B cell (primary cell): ENCODE measurements at regions of chr2 and their contacts with region 1.

Region 1: GRCh38 chr2:112275306-112275886 is at the start of gene ZC3H6:
- DNase-seq: peak; percentile 100
- ATAC-seq: peak; percentile 89
- H3K4me3 ChIP-seq: peak within 1 kb of the TSS; percentile 85 to 99 (median 97)
- H3K4me3 Mint-ChIP-seq: peak within 1 kb of the TSS; percentile 96
- H3K27ac ChIP-seq: peak within 1 kb of the TSS; percentile 99 to 100
- H3K27ac Mint-ChIP-seq: peak within 1 kb of the TSS; percentile 100
- H3K4me1 ChIP-seq: peaks cover 4 to 10% of the 10 kb centered on the region in 2 donors
- H3K4me1 Mint-ChIP-seq: peaks cover 15% of the 10 kb centered on the region
- H3K27me3 ChIP-seq: no peaks in the 10 kb centered on the region
- H3K27me3 Mint-ChIP-seq: no peaks in the 10 kb centered on the region
- CTCF ChIP-seq: no peak
- total RNA-seq, gene ZC3H6: 16.6 and 21.9 TPM in 2 replicates

Region 2: DNA sequence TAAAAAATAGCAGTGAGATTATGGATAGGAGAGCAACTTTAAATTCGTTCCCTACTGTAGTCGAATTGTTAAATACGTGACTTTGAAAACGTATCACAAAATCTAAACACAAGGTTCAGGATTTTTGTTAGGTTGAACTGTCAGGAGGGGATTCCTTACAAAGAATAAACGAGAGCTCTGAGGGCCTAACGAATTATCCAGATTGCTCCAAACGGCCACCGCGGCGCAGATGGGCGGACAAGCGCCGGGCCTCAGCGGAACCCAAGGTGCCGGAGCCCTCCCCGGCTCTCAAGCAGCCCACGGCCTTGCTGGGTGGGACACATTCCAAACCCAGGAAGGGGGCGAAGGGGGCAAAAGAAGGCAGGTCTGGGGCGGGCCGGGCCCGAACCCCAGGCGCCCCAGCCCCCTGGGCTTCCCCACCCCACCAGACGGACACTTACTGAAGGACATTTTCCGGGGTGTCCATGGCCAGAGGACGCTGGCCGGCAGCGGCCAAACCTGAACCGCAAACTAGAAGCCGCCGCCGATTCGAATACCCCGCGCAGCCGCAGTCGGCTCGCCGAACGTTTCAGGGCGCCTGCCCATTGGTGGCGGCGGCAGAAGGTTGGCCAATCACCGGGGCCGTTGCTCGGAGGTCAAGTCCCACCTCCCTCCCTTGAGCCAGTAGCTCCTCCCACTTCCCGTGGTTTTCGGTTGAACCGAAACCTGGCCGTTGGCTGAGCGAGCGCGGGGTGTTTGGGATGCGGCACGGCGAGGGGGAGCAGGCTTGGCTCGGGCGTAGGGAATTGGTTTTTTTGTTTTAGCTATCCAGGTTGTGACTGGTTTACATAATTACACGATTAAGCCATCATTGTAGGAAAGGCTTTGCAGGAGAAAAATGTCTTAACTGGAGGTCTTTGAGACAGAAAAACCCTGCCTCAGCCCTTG is 1597.6 kb before region 1 on chr2 and contains the start of gene BUB1:
- CTCF ChIA-PET with region 1: no interaction called
- POLR2A ChIA-PET with region 1: no interaction called
- intact Hi-C with region 1: loop called (anchors 5 kb)
- DNase-seq: peak; percentile 96
- ATAC-seq: peak; percentile 92
- H3K4me3 ChIP-seq: peak within 1 kb of the TSS; percentile 69 to 98 (median 93)
- H3K4me3 Mint-ChIP-seq: peak within 1 kb of the TSS; percentile 96
- H3K27ac ChIP-seq: peak within 1 kb of the TSS; percentile 77 to 81
- H3K27ac Mint-ChIP-seq: peak within 1 kb of the TSS; percentile 91
- H3K4me1 ChIP-seq: peaks cover 34 to 35% of the 10 kb centered on the region in 2 donors
- H3K4me1 Mint-ChIP-seq: peaks cover 40% of the 10 kb centered on the region
- H3K27me3 ChIP-seq: no peaks in the 10 kb centered on the region
- H3K27me3 Mint-ChIP-seq: no peaks in the 10 kb centered on the region
- CTCF ChIP-seq: no peak
- total RNA-seq, gene BUB1: 1.6 and 2.0 TPM in 2 replicates

Region 3: DNA sequence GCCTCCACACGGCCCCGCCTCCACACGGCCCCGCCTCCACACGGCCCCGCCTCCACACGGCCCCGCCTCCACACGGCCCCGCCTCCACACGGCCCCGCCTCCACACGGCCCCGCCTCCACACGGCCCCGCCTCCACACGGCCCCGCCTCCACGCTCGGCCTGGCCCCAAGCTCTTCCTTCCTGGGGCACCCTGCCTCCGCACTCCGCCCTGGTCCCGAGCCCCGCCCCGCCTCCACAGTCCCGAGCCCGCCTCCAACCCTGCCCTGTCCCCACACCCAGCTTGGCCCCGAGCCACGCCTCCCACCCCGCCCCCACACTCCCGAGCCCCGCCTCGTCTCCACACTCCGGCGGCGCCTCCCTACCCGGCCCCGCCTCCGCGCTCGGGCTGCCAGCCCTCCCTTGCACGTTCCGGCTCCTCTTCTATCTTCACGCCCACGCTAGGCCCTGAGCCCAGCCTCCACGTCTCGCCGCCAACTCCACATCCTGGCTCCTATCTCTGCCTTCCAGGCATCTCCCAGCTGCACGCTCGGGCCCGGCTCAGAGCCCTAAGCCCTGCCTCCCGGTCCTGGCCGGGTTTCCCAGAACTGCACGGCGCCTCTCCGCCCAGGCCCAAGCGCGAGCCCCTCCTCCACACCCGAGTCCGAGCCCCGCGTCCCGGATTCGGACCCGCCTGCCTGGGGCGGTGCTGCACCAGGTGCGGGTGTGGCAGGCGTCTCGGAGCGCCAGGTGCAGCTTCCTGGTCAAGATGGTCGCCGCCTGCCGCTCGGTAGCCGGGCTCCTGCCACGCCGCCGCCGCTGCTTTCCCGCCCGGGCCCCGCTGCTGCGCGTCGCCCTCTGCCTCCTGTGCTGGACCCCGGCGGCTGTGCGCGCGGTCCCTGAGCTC is 220.3 kb before region 1 on chr2 and contains the start of gene TMEM87B:
- CTCF ChIA-PET with region 1: no interaction called
- POLR2A ChIA-PET with region 1: interaction called, 4 read pairs
- intact Hi-C with region 1: loop called (anchors 1 kb)
- DNase-seq: peak; percentile 97
- ATAC-seq: peak; percentile 70
- H3K4me3 ChIP-seq: peak within 1 kb of the TSS; percentile 47 to 94 (median 87)
- H3K4me3 Mint-ChIP-seq: peak within 1 kb of the TSS; percentile 99
- H3K27ac ChIP-seq: peak within 1 kb of the TSS; percentile 80 to 87
- H3K27ac Mint-ChIP-seq: peak within 1 kb of the TSS; percentile 98
- H3K4me1 ChIP-seq: peaks cover 18 to 19% of the 10 kb centered on the region in 2 donors
- H3K4me1 Mint-ChIP-seq: peaks cover 41% of the 10 kb centered on the region
- H3K27me3 ChIP-seq: no peaks in the 10 kb centered on the region
- H3K27me3 Mint-ChIP-seq: no peaks in the 10 kb centered on the region
- CTCF ChIP-seq: no peak
- total RNA-seq, gene TMEM87B: 21.0 and 21.1 TPM in 2 replicates

Region 4: GRCh38 chr2:112259509-112260294 is 15.7 kb before region 1 on chr2:
- CTCF ChIA-PET with region 1: interaction called, 22 read pairs
- POLR2A ChIA-PET with region 1: interaction called, 6 read pairs
- intact Hi-C with region 1: loop called (anchors 1 kb)
- DNase-seq: peak; percentile 87
- ATAC-seq: peak; percentile 40
- H3K4me3 ChIP-seq: peak overlapping the region in 3 of 5 experiments; percentile 8 to 29 (median 12)
- H3K4me3 Mint-ChIP-seq: peak overlapping the region; percentile 70
- H3K27ac ChIP-seq: no peak overlapping the region
- H3K27ac Mint-ChIP-seq: peak overlapping the region; percentile 67
- H3K4me1 ChIP-seq: peaks cover 5 to 13% of the 10 kb centered on the region in 2 donors
- H3K4me1 Mint-ChIP-seq: peaks cover 11% of the 10 kb centered on the region
- H3K27me3 ChIP-seq: no peaks in the 10 kb centered on the region
- H3K27me3 Mint-ChIP-seq: no peaks in the 10 kb centered on the region
- CTCF ChIP-seq: peak; percentile 97

Region 5: DNA sequence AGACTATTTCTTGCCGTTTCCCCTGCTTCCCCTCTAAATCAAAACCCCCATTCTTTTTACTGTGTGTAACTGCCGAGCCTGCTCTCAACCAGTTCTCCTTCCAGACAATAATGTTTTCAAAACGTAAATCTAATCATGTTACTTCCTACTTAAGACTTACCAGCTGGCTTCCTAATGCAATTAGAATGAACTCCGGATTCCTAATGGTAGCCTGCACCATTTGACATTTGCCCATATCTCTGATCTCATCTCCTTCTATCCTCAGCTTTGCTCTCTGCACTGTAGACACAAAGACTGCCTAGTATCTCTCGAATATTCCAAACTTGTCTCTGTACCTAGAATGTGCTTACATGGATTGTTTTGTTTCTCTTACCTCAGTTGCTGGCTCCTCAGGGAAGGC is 219.4 kb after region 1 on chr2:
- CTCF ChIA-PET with region 1: no interaction called
- POLR2A ChIA-PET with region 1: interaction called, 13 read pairs
- intact Hi-C with region 1: no loop called
- DNase-seq: no peak
- ATAC-seq: no peak
- H3K4me3 ChIP-seq: no peak overlapping the region
- H3K4me3 Mint-ChIP-seq: no peak overlapping the region
- H3K27ac ChIP-seq: no peak overlapping the region
- H3K27ac Mint-ChIP-seq: no peak overlapping the region
- H3K4me1 ChIP-seq: no peaks in the 10 kb centered on the region
- H3K4me1 Mint-ChIP-seq: no peaks in the 10 kb centered on the region
- H3K27me3 ChIP-seq: no peaks in the 10 kb centered on the region
- H3K27me3 Mint-ChIP-seq: no peaks in the 10 kb centered on the region
- CTCF ChIP-seq: no peak

Region 6: DNA sequence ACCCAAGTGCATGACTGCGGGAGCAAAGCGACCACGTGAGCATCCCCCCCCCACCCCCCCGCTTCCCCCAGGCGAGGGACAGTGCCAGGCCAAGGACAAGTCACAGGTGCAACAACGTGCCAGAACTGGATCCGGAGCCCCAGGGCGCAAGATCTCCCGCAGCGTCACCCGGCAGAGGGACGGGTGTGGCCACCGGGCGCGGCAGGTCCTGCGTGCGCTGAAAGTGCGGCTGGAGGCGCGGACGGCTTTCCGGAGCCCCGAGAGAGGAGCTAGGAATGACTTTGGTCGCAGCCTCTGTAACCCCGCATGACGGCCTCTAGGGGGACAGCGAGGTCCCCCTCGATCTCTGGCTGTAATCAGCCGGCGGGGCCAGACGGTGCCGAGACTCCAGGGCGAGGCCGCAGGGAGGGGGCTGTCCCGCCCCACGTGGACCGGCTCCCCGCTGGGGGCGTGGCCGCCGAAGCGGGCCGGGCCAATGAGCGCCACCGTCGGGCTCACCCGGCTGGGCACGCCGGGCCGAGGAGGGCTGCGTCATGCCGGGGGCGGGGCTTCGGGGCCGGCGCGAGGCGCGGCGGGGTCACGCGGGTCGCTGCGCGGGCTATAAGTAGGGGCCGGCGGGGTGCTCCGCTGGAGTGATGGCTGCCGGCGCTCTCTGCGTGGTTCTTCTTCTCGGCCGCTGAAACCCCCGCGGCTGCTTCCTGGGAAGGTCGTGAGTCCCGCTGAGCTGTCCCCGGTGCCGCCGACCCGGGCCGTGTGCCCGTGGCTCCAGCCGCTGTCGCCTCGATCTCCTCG is 370.1 kb after region 1 on chr2 and contains the start of gene SLC20A1:
- CTCF ChIA-PET with region 1: no interaction called
- POLR2A ChIA-PET with region 1: no interaction called
- intact Hi-C with region 1: loop called (anchors 1 kb)
- DNase-seq: peak; percentile 98
- ATAC-seq: peak; percentile 93
- H3K4me3 ChIP-seq: peak within 1 kb of the TSS; percentile 65 to 98 (median 90)
- H3K4me3 Mint-ChIP-seq: peak within 1 kb of the TSS; percentile 94
- H3K27ac ChIP-seq: peak within 1 kb of the TSS; percentile 90 to 96
- H3K27ac Mint-ChIP-seq: peak within 1 kb of the TSS; percentile 90
- H3K4me1 ChIP-seq: peaks cover 15 to 20% of the 10 kb centered on the region in 2 donors
- H3K4me1 Mint-ChIP-seq: peaks cover 26% of the 10 kb centered on the region
- H3K27me3 ChIP-seq: no peaks in the 10 kb centered on the region
- H3K27me3 Mint-ChIP-seq: no peaks in the 10 kb centered on the region
- CTCF ChIP-seq: peak; percentile 69
- total RNA-seq, gene SLC20A1: 54.9 and 57.1 TPM in 2 replicates